Ovary (tissue), 10 donors: ENCODE measurements at regions of chr11 and their contacts with region 1.

Region 1: DNA sequence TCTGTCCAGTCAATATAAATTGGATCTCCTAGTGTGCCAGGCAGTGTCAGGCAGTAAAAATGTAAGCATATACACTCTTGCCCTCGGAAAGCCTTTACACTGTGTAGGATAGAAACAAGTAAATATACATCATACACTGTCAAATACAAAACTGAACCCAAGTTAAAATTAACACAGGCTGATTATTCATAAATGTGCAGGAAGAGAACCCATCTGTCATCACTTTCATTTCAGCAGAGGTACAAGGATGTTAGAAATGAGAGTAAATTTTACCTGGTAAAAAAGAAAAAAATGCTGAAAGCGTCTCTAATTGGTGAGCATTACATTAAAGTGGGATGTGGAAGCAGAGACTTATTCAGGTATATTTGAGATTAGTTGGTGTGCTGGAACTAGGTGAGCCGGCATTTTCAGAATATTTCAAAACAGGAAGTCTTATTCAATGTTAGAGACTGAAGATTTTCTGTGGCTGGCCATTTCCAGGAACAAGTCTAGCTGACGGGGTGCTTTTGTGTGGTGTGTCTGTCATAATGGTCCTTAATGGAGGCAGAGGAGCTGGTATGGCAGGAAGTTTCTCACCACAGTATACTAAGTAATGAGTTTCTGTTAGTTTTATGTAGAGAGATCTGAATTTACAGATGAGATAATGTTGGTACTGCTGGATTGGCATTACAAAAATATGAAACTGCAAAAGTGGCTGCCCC is 192.6 kb downstream of the CASP12 start:
- DNase-seq: no peak
- H3K4me3 ChIP-seq: no peak overlapping the region
- H3K27ac ChIP-seq: no peak overlapping the region
- H3K4me1 ChIP-seq: no peaks in the 10 kb centered on the region
- H3K27me3 ChIP-seq: no peaks in the 10 kb centered on the region
- CTCF ChIP-seq: no peak
- EP300 ChIP-seq: no peak
- POLR2A ChIP-seq: no peak

Region 2: DNA sequence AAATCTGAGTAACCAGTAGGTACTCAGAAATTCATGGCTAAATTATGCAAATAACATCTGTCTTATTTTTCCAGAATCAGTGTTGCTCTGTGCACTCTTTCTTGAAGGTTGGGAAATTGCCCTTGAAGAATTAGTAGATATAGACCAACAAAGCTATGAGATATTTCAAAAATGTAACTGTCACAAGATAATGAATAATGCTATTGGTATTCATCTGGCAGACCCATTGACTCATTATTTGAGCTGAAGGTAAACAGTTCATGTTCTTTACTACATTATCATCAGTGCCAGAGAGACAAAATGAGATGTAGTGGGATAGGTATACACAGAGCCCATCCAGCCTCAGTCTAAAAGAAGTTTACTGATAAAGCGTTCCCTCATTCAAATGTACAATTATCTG is 82.1 kb before region 1 on chr11:
- intact Hi-C with region 1: loop called in 1 of 4 experiments (anchors 10 kb)
- DNase-seq: no peak
- H3K4me3 ChIP-seq: no peak overlapping the region
- H3K27ac ChIP-seq: no peak overlapping the region
- H3K4me1 ChIP-seq: no peaks in the 10 kb centered on the region
- H3K27me3 ChIP-seq: no peaks in the 10 kb centered on the region
- CTCF ChIP-seq: no peak
- EP300 ChIP-seq: no peak
- POLR2A ChIP-seq: no peak

Region 3: GRCh38 chr11:104688731-104689130 is 16.9 kb before region 1 on chr11:
- intact Hi-C with region 1: no loop called
- DNase-seq: no peak
- H3K4me3 ChIP-seq: no peak overlapping the region
- H3K27ac ChIP-seq: no peak overlapping the region
- H3K4me1 ChIP-seq: no peaks in the 10 kb centered on the region
- H3K27me3 ChIP-seq: no peaks in the 10 kb centered on the region
- CTCF ChIP-seq: no peak
- EP300 ChIP-seq: no peak
- POLR2A ChIP-seq: no peak